CD4-positive, alpha-beta memory T cell (primary cell): ENCODE measurements at regions of chr1 and their contacts with region 1.

Region 1: DNA sequence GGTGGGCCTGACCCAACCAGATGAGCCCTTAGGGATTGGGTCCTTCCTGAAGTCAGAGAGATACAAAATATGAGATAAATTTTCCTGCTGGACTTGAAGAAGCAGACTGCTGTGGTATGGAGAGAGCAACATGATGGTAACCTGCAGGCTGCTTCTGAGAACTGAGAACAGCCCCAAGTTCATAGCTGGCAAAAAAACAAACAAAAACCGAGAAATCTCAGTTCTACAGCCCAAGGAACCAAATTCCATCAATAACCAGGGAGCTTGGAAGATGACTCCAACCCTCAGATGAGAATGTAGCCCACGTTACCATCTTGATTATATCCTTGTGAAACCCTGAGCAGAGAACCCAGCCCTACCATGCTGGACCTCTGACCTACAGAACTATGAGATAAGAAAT is 316.2 kb downstream of the ZP4 start:
- DNase-seq: no peak
- H3K4me3 ChIP-seq: no peak overlapping the region
- H3K4me3 Mint-ChIP-seq: no peak overlapping the region
- H3K27ac ChIP-seq: no peak overlapping the region
- H3K27ac Mint-ChIP-seq: no peak overlapping the region
- H3K4me1 ChIP-seq: no peaks in the 10 kb centered on the region
- H3K4me1 Mint-ChIP-seq: no peaks in the 10 kb centered on the region
- H3K27me3 ChIP-seq: no peaks in the 10 kb centered on the region
- H3K27me3 Mint-ChIP-seq: peaks cover 2% of the 10 kb centered on the region in 2 donors

Region 2: DNA sequence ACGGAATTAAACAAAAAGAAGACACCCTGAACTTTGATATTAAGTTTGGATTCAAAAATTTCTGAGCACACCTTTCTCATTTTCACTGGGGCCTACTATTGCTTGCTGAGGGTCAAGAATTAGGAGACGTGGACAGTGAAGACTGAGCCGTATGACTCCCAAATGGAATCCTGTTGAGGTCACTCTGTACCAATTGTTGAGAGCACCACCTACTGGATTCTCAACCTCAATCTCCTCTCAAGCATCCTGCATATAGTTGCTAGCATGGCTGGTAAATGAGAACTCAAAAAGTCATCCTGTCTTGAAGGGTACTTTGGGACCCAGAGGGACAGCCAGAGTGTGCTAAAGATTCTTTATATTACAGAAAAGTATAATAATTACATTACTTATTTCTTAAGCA is 799.6 kb before region 1 on chr1:
- CTCF ChIA-PET with region 1: no interaction called
- POLR2A ChIA-PET with region 1: no interaction called
- intact Hi-C with region 1: no loop called
- DNase-seq: no peak
- H3K4me3 ChIP-seq: no peak overlapping the region
- H3K4me3 Mint-ChIP-seq: no peak overlapping the region
- H3K27ac ChIP-seq: no peak overlapping the region
- H3K27ac Mint-ChIP-seq: no peak overlapping the region
- H3K4me1 ChIP-seq: no peaks in the 10 kb centered on the region
- H3K4me1 Mint-ChIP-seq: no peaks in the 10 kb centered on the region
- H3K27me3 ChIP-seq: peaks cover 3% of the 10 kb centered on the region
- H3K27me3 Mint-ChIP-seq: peaks cover 14 to 24% of the 10 kb centered on the region in 2 donors

Region 3: GRCh38 chr1:236830560-236830959 is 744.0 kb before region 1 on chr1:
- CTCF ChIA-PET with region 1: no interaction called
- POLR2A ChIA-PET with region 1: no interaction called
- intact Hi-C with region 1: no loop called
- DNase-seq: no peak
- H3K4me3 ChIP-seq: no peak overlapping the region
- H3K4me3 Mint-ChIP-seq: no peak overlapping the region
- H3K27ac ChIP-seq: no peak overlapping the region
- H3K27ac Mint-ChIP-seq: no peak overlapping the region
- H3K4me1 ChIP-seq: no peaks in the 10 kb centered on the region
- H3K4me1 Mint-ChIP-seq: peaks cover 0 to 8% (median 6%) of the 10 kb centered on the region in 4 donors
- H3K27me3 ChIP-seq: no peaks in the 10 kb centered on the region
- H3K27me3 Mint-ChIP-seq: no peaks in the 10 kb centered on the region

Region 4: GRCh38 chr1:237562242-237562823 is 12.2 kb before region 1 on chr1:
- CTCF ChIA-PET with region 1: interaction called, 10 read pairs
- POLR2A ChIA-PET with region 1: no interaction called
- intact Hi-C with region 1: no loop called
- DNase-seq: peak in 4 of 5 donors; percentile 32 to 46 (median 39)
- H3K4me3 ChIP-seq: no peak overlapping the region
- H3K4me3 Mint-ChIP-seq: no peak overlapping the region
- H3K27ac ChIP-seq: no peak overlapping the region
- H3K27ac Mint-ChIP-seq: no peak overlapping the region
- H3K4me1 ChIP-seq: no peaks in the 10 kb centered on the region
- H3K4me1 Mint-ChIP-seq: peaks cover 0 to 3% (median 0%) of the 10 kb centered on the region in 4 donors
- H3K27me3 ChIP-seq: no peaks in the 10 kb centered on the region
- H3K27me3 Mint-ChIP-seq: peaks cover 0 to 2% of the 10 kb centered on the region in 2 donors